Aorta (tissue), 5 donors: ENCODE measurements at regions of chr11 and their contacts with region 1.

Region 1: DNA sequence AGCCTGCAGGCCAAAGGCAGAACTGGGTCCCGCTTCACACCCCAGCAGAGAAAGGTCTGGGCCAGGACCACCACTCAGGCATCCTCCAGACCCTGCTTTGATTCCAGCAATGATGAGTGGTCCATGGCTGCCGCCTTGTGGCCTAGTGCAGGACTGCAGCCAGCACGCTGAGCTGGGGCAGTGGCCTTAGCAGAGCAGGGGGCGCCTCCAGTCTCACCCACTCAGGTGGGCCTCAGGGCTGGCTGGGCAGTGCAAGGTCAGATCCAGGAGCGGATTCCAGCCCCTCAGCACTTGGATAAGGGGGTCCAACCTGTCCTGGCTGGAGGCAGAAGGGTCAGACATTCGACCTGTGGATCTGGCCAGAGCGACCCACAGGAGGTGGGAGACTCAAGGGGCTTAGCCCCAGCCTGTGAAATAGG is 9.6 kb upstream of the PDE2A start:
- DNase-seq: peak; percentile 72 to 92
- ATAC-seq: peak; percentile 78
- H3K4me3 ChIP-seq: no peak overlapping the region
- H3K27ac ChIP-seq: no peak overlapping the region
- H3K4me1 ChIP-seq: no peaks in the 10 kb centered on the region
- H3K27me3 ChIP-seq: no peaks in the 10 kb centered on the region

Region 2: DNA sequence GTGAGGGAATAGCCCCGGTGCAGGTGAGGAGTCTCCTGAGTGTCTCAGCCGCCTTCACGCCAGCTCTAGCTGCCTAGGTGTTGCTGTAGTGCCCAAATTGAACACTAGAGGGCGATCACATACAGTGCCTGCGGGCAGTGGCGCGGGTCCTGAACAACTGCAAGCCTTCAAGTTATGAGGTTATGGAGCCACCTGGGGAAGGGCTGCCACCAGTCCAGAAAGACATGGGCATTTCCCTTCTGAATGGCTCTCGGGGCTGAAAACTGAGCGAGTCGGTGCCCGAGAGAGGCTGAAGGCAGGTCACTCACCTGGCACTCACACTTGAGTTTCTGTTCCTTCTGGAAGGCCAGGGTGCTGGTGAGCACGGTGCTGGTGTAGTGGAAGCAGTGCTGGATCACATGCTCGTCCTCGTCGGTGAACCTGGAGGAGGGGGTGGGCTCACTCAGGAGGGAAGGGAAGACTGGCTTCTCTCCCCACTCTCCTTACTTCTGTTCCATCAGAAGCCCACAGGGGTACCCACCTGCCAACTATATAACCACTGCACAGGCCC is 98.0 kb before region 1 on chr11:
- intact Hi-C with region 1: loop called (anchors 1 to 2 kb)
- DNase-seq: peak; percentile 66 to 78
- ATAC-seq: peak; percentile 76
- H3K4me3 ChIP-seq: no peak overlapping the region
- H3K27ac ChIP-seq: no peak overlapping the region
- H3K4me1 ChIP-seq: no peaks in the 10 kb centered on the region
- H3K27me3 ChIP-seq: no peaks in the 10 kb centered on the region

Region 3: DNA sequence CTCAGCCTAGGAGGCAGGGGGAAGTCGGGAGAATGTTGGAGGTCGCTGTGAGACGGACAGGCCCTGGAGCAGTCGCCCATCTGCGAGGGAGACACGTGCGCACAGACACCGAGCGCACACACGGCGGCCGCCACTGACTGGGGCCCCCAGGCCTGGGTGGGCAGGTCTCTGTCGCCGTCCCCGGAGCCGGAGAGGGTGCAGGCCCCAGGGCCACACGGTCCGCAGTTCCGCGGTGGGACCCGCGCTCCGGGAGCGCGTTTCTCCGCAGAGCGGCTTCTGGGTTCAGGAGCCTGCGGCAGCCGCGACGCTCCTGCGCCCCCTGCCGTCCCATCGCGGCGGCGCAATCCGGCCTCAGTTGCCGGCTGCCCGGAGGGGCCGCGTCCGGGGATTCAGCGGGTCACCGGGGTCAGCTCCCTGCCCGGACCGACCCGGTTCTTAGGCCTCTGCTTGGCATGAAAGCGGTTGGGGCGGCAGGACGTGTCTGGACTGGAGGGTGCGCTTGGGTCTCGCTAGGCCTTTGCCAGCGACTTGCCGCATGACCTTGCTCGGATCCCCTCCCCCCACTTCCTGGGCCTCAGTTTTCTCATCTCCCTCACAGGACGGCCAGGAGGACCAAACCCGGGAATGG is 40.8 kb before region 1 on chr11:
- intact Hi-C with region 1: no loop called
- DNase-seq: peak; percentile 71 to 90
- ATAC-seq: peak; percentile 83
- H3K4me3 ChIP-seq: peak overlapping the region; percentile 12 to 15
- H3K27ac ChIP-seq: no peak overlapping the region
- H3K4me1 ChIP-seq: no peaks in the 10 kb centered on the region
- H3K27me3 ChIP-seq: no peaks in the 10 kb centered on the region